Upper lobe of right lung (tissue), 1 donor: ENCODE measurements at regions of chr19 and their contacts with region 1.

Region 1: GRCh38 chr19:54231077-54231931 is 8.5 kb upstream of the LILRB3 start:
- DNase-seq: peak; percentile 93
- ATAC-seq: peak; percentile 99
- H3K4me3 ChIP-seq: no peak overlapping the region
- H3K27ac ChIP-seq: no peak overlapping the region
- H3K4me1 ChIP-seq: no peaks in the 10 kb centered on the region
- H3K27me3 ChIP-seq: no peaks in the 10 kb centered on the region
- CTCF ChIP-seq: peak; percentile 95

Region 2: DNA sequence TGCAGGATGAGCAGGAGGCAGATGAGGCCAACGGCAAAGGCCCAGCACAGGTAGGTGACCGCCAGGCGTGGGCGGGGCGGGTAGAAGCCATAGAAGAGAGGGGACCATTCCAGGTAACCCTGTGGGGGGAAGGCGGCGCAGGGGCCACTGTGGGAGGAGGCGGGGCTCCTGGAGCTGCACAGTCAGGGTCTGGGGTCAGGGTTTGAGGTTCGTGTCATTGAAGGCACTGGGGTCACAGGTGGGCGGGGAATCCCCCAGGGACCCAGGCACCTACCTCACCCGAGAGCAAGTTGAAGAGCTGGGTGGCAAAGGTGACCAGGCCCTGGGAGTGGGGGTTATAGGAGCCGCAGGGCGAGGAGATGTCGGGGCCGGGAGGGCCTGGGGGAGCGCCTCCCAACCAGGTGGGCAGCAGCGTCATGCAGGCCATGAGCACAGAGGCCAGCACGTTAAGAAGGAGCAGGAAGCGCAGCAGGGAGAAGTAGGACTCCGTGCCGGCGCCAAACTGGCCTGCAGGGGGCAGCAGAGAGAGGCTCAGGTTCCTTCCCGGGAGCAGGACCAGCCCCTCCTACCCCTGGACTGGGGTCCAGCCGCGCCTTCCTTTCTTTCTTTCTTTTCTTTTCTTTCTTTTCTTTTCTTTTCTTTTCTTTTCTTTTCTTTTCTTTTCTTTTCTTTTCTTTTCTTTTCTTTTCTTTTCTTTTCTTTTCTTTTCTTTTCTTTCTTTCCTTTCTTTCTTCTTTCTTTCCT is 63.0 kb before region 1 on chr19:
- intact Hi-C with region 1: loop called (anchors 5 kb)
- DNase-seq: peak; percentile 96
- ATAC-seq: peak; percentile 88
- H3K4me3 ChIP-seq: no peak overlapping the region
- H3K27ac ChIP-seq: no peak overlapping the region
- H3K4me1 ChIP-seq: peaks cover 9% of the 10 kb centered on the region
- H3K27me3 ChIP-seq: no peaks in the 10 kb centered on the region
- CTCF ChIP-seq: peak; percentile 92